Dendritic cell treated with granulocyte-macrophage colony-stimulating factor and Interleukin-4, amounts not matched to agents 40 ng/mL and 50 ng/mL, for 4 days (primary cell): ENCODE measurements at regions of chr2 and their contacts with region 1.

Region 1: DNA sequence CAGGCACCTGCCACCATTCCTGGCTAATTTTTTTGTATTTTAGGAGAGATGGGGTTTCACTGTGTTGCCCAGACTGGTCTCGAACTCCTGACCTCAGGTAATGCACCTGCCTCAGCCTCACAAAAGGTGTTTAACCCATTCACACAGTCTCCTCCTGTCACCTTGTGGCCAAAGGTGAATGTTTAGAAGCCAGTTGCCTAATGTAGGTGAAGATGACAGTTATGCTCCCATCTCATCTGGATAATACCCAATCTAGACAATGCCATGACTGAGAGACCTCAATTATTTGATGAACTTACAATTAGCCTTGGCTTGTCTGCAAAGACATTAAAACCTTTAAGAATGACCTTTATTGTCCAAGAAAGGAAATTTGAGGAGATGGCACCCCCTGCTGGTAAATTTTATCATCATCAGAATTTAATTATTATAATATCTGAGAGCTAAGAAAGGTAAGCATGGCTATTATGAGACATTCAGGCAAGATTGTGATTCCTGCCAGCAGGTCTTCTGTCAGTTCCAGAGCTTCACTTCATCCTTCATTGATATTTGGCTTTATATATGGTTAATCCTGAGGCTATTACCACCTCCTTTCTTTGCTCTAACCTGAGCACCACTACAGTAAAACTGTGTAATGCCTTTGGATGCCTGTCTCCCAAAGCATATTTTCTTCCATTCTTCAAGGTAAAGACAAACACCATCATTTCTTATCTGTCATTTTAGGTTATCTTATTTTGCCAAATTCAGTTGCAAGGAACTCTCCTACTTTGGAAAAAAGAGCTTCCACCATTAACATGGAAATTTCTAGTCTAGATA is 117.6 kb downstream of the FAM124B start:
- H3K4me3 Mint-ChIP-seq: no peak overlapping the region
- H3K27ac Mint-ChIP-seq: no peak overlapping the region
- H3K4me1 Mint-ChIP-seq: no peaks in the 10 kb centered on the region
- H3K27me3 Mint-ChIP-seq: peaks cover 7% of the 10 kb centered on the region

Region 2: GRCh38 chr2:223469270-223470046 is 814.9 kb before region 1 on chr2:
- intact Hi-C with region 1: no loop called
- H3K4me3 Mint-ChIP-seq: no peak overlapping the region
- H3K27ac Mint-ChIP-seq: no peak overlapping the region
- H3K4me1 Mint-ChIP-seq: peaks cover 28% of the 10 kb centered on the region
- H3K27me3 Mint-ChIP-seq: no peaks in the 10 kb centered on the region

Region 3: GRCh38 chr2:223779877-223780276 is 504.5 kb before region 1 on chr2:
- intact Hi-C with region 1: loop called (anchors 5 kb)
- H3K4me3 Mint-ChIP-seq: no peak overlapping the region
- H3K27ac Mint-ChIP-seq: no peak overlapping the region
- H3K4me1 Mint-ChIP-seq: no peaks in the 10 kb centered on the region
- H3K27me3 Mint-ChIP-seq: no peaks in the 10 kb centered on the region

Region 4: GRCh38 chr2:223970343-223971128 is 313.8 kb before region 1 on chr2:
- intact Hi-C with region 1: loop called (anchors 1 kb)
- H3K4me3 Mint-ChIP-seq: no peak overlapping the region
- H3K27ac Mint-ChIP-seq: no peak overlapping the region
- H3K4me1 Mint-ChIP-seq: no peaks in the 10 kb centered on the region
- H3K27me3 Mint-ChIP-seq: no peaks in the 10 kb centered on the region